ENCODE measurements at regions of chr11 and their contacts with region 1.

Region 1: GRCh38 chr11:117817368-117818040 is 7.0 kb downstream of the FXYD2 start:
- DNase-seq: peak; percentile 81 to 90 (median 89)
- ATAC-seq: peak; percentile 52
- H3K4me3 ChIP-seq: no peak overlapping the region
- H3K4me1 ChIP-seq: peaks cover 56% of the 10 kb centered on the region
- CTCF ChIP-seq: peak; percentile 99

Region 2: DNA sequence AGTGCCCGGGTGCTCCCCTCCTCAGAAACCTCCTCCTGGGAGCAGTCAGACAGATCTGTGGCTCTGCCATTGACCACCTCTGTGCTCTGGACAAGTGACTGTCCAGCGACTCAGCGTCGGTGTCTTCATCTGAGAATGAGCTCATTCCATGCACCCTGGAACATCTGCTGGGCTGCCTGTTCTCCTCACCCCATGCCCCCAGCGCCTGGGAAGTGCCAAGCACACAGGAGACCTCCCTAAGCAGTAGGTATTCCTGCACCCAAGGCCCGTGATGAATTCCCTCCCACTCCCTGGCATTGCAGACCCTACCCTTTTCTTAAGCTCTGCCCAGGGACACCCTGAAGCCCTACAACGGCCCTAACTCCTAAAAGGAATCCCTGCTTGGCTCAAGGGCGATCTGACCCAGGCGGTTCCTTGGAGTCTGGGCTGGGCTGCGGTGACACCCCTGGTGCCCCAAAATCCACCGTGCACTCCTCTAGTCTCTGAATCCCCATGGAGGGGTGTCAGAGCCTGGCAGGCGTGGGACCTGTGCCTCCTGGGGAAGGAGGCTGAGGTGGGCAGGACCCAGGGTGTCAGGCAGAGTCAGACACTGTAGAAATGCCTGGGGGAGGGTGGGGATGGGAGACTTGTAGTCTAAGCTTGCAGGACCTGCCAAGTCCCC is 397.9 kb before region 1 on chr11:
- intact Hi-C with region 1: loop called in 1 of 2 experiments (anchors 5 kb)
- DNase-seq: no peak
- ATAC-seq: no peak
- H3K4me3 ChIP-seq: no peak overlapping the region
- H3K4me1 ChIP-seq: no peaks in the 10 kb centered on the region
- CTCF ChIP-seq: no peak

Region 3: DNA sequence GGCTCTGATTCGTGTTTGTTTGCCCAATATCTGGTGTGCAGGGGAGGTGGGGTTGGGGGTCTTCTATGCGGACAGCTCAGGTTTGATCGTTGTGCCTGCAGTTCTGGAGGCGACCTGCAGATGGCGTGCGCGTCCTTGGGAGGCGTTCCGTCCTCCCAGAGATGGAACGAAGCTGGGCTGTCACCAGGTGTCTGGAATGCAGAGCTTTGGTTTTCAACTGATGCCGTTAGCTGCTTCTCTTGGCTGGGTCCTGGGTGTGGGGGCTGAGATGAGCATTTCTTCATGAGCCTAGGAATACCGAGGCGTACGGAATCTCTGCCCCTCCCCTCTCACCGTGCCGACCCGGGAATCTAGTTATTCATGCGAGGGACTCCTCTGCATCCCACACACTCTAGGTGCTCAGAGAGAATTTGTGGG is 391.2 kb before region 1 on chr11:
- intact Hi-C with region 1: loop called (anchors 5 kb)
- DNase-seq: peak in 2 of 3 donors; percentile 74 to 78
- ATAC-seq: peak; percentile 84
- H3K4me3 ChIP-seq: no peak overlapping the region
- H3K4me1 ChIP-seq: no peaks in the 10 kb centered on the region
- CTCF ChIP-seq: peak; percentile 93

Region 4: DNA sequence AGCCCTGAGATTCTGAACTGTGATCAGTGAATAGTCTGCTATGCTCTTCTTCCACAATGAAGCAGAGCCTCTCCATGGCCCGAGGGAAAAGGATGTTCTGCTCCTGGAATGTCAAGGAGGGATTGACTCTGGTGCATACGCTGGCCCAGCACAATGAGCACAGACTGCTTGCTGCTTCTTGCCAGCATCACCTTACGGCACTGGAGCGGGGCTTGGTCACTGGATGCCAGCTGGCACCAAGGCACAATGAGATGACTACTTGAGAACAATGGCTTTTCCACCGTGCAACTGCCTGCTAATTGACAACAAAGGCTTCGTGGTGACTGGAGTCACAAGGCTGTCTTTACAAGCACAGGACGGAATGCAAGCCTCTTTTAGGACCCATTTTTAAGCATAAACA is 159.7 kb before region 1 on chr11:
- intact Hi-C with region 1: no loop called
- DNase-seq: no peak
- ATAC-seq: no peak
- H3K4me3 ChIP-seq: no peak overlapping the region
- H3K4me1 ChIP-seq: peaks cover 8% of the 10 kb centered on the region
- CTCF ChIP-seq: no peak

Region 5: DNA sequence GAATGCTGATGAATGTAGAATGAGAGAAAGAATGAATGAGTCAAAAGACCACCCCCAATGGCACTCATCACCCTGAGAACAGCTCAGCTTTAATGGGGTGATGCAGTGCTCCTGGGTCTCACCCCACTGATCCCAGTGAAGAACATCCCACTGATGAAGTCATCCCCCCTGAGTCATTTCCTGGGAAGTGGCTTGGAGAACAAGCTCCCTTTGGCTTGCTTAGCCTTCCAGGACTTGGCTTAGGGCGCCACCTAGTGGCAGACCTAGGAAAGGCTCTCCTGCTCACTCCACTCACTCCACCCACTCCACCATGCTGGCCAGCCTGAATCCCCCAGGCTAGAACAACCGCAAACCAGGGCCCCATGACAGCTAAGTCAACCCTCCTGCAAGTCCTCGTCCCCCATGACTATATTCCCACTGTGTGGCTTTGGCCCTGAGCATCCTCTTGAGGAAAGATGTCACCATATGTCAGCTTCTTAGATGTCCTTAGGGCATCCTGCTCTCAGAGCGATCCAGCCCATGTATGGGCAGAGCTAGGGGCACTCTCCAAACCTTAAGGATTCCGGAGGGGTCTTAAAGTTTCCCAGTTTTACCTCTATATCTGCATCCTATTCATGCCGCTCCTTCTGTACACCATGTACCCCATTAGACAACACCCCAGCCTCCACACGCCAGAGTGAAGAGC is 129.5 kb after region 1 on chr11:
- intact Hi-C with region 1: loop called in 1 of 2 experiments (anchors 10 kb)
- DNase-seq: peak; percentile 85 to 92 (median 90)
- ATAC-seq: peak; percentile 94
- H3K4me3 ChIP-seq: no peak overlapping the region
- H3K4me1 ChIP-seq: no peaks in the 10 kb centered on the region
- CTCF ChIP-seq: peak; percentile 80